HepG2 (cell line): ENCODE measurements at regions of chr20 and their contacts with region 1.

Region 1: DNA sequence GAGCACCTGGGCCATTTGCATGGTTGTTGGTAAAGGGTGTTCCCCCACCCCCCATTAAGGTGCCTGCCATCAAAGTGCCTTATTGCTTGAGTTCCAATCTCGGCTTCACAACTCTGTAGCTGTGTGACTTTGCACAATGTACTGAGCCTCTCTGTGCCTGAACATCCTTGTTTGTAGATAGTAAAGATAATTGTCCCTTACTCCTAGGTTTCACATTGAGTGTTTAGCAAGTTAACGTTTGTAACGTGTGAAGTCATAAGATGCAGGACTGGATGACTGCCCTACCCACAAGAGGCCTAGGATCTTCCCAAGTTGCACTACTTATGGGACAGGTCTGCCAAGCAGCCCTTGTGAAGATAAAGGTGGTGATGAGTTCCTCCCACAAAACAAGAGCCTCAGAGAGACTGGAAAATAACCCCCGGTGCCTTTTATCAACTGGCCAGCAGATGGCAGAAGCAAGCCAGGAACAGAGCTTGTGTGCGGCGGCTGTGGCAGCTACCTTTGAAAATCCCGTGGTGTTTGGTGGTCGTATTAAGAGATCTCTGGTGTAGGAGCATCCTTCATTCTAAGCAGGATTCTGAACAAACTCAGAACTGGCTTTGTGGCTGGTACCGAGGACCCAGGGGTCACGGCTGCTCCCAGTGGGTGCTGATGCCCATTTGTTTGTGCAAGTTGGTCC is 99.0 kb downstream of the CDH26 start:
- DNase-seq: peak; percentile 66
- ATAC-seq: peak; percentile 78
- H3K4me3 ChIP-seq: no peak overlapping the region
- H3K27ac ChIP-seq: no peak overlapping the region
- H3K4me1 ChIP-seq: peaks cover 10% of the 10 kb centered on the region; the same call in 1 of the 2 replicates
- H3K27me3 ChIP-seq: peaks cover 4 to 63% of the 10 kb centered on the region in 2 experiments; a peak in 3 of 5 replicates
- CTCF ChIP-seq: peak; percentile 91
- EP300 ChIP-seq: no peak
- POLR2A ChIP-seq: no peak
- RAD21 ChIP-seq: peak; percentile 73

Region 2: DNA sequence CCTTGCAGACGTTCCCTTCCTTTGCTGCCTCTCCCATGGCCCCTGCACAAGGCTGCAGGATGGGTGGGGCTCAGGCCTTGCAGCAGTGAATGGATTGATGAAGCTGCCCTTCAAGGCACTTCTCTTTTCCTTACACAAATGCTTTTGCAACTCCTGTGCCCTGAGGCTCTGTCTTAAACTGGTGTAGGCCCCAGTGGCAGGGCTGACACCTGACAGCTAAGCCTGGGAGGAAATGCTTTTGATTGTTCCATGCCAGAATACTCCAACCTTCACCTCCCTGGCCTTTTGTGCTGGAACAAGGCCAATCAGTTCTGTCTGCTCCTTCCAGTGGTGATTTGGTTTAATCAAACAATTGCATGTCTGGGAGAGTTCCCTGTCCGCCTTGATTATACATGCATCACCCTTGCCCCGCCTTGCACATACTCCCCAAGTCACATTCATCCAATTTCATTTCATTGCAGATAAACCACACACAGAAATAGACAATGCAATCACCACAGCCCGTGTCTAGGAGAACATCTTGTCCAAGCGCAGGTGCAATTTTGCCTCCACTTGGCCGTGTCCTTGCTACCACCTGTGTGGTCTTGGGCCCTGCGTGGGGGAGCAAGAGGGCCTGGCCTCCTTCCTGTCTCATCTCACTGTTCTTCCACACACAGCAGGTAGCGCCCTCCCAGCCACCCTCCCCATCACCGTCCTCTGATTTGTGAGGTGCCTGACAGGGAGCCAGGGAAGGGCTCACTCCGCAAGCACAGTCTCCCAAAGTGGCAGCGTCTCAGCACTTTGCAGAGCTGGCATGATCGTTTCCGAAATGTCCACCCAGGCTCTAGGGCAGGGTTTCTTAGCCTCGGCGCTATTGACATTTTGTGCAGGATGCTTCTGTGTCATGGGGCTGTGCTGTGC is 21.3 kb after region 1 on chr20:
- CTCF ChIA-PET with region 1: no interaction called
- POLR2A ChIA-PET with region 1: no interaction called
- in situ Hi-C with region 1: no loop called
- intact Hi-C with region 1: no loop called
- DNase-seq: no peak
- ATAC-seq: no peak
- H3K4me3 ChIP-seq: no peak overlapping the region
- H3K27ac ChIP-seq: no peak overlapping the region
- H3K4me1 ChIP-seq: no peaks in the 10 kb centered on the region
- H3K27me3 ChIP-seq: no peaks in the 10 kb centered on the region
- CTCF ChIP-seq: no peak
- EP300 ChIP-seq: no peak
- POLR2A ChIP-seq: no peak
- RAD21 ChIP-seq: no peak

Region 3: DNA sequence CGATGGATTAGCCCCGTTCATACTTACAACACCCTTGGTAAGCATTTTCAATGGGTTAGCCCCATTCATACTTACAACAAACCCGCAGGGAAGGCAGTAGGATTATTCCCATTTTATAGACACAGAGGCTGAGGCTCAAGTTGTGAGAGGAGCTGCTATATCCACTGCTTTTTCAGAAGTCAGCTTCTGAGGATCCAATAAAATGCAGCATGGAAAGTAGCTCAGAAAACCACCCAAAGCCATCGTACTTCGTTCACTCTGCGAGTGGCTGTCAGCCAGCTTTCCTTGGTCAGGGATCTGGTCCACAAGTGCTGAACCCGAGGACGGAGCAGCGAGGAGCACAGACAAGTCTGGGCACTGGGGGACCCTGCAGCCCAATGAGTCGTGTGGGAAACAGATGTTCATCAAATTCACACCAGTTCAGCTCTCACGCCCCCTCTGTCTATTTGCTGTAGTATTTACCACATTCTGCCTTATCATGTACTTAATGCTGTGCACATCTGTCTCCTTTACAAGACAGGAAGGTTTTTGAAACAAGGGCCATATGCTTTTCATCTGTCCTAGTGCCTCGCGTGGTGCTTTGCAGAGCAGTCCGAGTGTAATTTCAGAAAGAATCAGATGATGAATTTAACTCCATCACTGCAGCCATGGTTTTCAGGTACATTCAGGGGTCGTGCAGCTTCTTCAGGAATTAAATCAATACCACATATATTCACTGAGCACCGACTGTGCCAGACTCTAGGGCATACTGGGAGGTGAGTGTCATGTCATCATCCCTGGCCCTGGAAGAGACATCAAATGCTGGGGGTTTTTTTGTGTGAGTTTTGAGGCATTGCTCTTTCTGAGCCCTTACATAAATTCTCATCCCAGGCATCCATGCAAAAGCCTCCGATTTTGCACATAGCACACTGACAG is 157.9 kb after region 1 on chr20:
- CTCF ChIA-PET with region 1: no interaction called
- POLR2A ChIA-PET with region 1: no interaction called
- in situ Hi-C with region 1: no loop called
- intact Hi-C with region 1: no loop called
- DNase-seq: no peak
- ATAC-seq: no peak
- H3K4me3 ChIP-seq: no peak overlapping the region
- H3K27ac ChIP-seq: no peak overlapping the region
- H3K4me1 ChIP-seq: no peaks in the 10 kb centered on the region
- H3K27me3 ChIP-seq: peaks cover 0 to 16% of the 10 kb centered on the region in 2 experiments; a peak in 2 of 5 replicates
- CTCF ChIP-seq: no peak
- EP300 ChIP-seq: no peak
- POLR2A ChIP-seq: no peak
- RAD21 ChIP-seq: no peak

Region 4: DNA sequence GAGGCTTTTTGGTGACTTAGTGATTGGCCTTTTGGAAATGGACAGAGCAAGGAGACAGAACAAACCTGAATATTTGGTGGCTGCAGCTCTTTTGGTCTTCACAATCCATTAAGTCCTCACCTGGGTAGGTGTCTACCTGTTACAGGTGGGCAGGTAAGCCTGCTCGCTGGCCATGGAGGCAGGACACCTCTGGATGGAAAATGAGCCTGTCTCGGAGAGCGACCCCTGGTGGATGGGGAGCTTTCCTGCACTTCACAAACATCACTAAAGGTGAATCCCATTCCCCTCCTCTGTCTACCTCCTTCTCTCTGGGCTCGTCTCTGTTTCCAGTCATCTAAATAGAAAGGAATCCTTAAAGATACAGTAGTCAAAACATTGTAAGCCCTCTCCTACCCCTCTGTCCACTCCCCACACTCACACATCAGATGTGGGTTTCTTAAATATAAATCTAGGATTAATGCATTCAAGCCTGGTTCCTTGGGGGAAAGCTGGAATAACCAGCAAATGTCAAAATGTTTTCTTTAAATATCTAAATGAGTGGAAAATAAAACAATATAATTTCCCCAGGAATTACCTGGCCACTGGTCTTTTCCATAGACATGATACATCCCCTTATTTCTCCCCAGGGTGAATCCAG is 205.8 kb after region 1 on chr20:
- CTCF ChIA-PET with region 1: interaction called, 5 read pairs
- POLR2A ChIA-PET with region 1: no interaction called
- in situ Hi-C with region 1: no loop called
- intact Hi-C with region 1: loop called (anchors 1 kb)
- DNase-seq: peak; percentile 29
- ATAC-seq: peak; percentile 57
- H3K4me3 ChIP-seq: no peak overlapping the region
- H3K27ac ChIP-seq: no peak overlapping the region
- H3K4me1 ChIP-seq: peaks cover 14% of the 10 kb centered on the region
- H3K27me3 ChIP-seq: peaks cover 0 to 5% of the 10 kb centered on the region in 2 experiments; a peak in 2 of 5 replicates
- CTCF ChIP-seq: peak; percentile 74
- EP300 ChIP-seq: no peak
- POLR2A ChIP-seq: no peak
- RAD21 ChIP-seq: no peak

Region 5: GRCh38 chr20:61120595-61121515 is 1063.6 kb after region 1 on chr20:
- CTCF ChIA-PET with region 1: interaction called, 4 read pairs
- POLR2A ChIA-PET with region 1: no interaction called
- in situ Hi-C with region 1: loop called (anchors 10 kb)
- intact Hi-C with region 1: no loop called
- DNase-seq: peak; percentile 67
- ATAC-seq: peak; percentile 80
- H3K4me3 ChIP-seq: no peak overlapping the region
- H3K27ac ChIP-seq: no peak overlapping the region
- H3K4me1 ChIP-seq: peaks cover 7% of the 10 kb centered on the region; the same call in 1 of the 2 replicates
- H3K27me3 ChIP-seq: peaks cover 1 to 36% of the 10 kb centered on the region in 2 experiments; a peak in 3 of 5 replicates
- CTCF ChIP-seq: peak; percentile 78
- EP300 ChIP-seq: no peak
- POLR2A ChIP-seq: no peak
- RAD21 ChIP-seq: peak; percentile 31; the same call in 1 of the 2 replicates

Region 6: GRCh38 chr20:61886721-61887594 is 1829.7 kb after region 1 on chr20:
- CTCF ChIA-PET with region 1: no interaction called
- POLR2A ChIA-PET with region 1: no interaction called
- in situ Hi-C with region 1: loop called (anchors 25 kb)
- intact Hi-C with region 1: no loop called
- DNase-seq: peak; percentile 53
- ATAC-seq: peak; percentile 76
- H3K4me3 ChIP-seq: no peak overlapping the region
- H3K27ac ChIP-seq: no peak overlapping the region
- H3K4me1 ChIP-seq: no peaks in the 10 kb centered on the region
- H3K27me3 ChIP-seq: peaks cover 20 to 50% of the 10 kb centered on the region in 2 experiments
- CTCF ChIP-seq: peak; percentile 97
- EP300 ChIP-seq: no peak
- POLR2A ChIP-seq: no peak
- RAD21 ChIP-seq: peak; percentile 79